Activated CD4-positive, alpha-beta memory T cell treated with anti-CD3 and anti-CD28 coated beads, Interleukin-2, amount 10 ng/mL, durations not matched to agents 7 days and 5 days (primary cell): ENCODE measurements at regions of chr11 and their contacts with region 1.

Region 1: DNA sequence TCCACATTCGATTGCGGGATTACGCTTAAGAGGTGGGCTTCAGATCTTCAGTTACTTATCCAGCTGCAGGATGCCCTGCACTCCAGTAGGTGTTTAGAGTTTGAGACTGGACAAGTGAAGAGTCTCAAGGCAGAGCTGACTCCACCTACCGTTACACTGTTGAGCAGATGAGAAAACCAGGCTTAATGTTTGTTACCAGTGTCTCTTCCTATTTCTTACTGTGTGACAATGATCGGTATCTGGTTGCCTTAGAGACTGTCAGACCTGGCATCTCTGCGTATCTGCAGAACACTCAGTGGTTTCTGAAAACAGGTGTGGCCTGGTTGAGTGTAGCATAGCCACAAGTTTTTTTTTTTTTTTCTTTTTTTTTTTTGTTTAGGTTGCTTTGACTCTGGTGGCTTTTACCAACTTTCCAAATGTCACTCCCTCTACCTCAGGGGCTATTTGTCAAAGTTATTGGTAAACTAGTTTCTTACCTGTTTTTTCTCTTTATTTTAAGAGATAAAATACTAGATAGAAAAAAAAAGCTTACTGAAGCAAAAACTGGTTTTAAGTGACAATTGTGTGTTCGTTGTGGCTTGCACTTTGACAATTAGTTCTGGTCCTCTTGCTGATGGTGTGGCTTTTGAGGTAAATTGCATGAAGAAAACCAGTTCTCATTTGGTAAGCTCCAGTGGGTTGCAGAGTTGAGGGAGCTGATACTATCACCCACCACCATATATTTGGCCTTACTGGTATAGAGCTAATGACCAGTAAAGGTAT is 284.8 kb downstream of the ETS1 start:
- DNase-seq: peak; percentile 84
- H3K4me3 Mint-ChIP-seq: peak overlapping the region; percentile 84
- H3K27ac Mint-ChIP-seq: peak overlapping the region; percentile 87
- H3K4me1 Mint-ChIP-seq: peaks cover 72% of the 10 kb centered on the region
- H3K27me3 Mint-ChIP-seq: no peaks in the 10 kb centered on the region

Region 2: DNA sequence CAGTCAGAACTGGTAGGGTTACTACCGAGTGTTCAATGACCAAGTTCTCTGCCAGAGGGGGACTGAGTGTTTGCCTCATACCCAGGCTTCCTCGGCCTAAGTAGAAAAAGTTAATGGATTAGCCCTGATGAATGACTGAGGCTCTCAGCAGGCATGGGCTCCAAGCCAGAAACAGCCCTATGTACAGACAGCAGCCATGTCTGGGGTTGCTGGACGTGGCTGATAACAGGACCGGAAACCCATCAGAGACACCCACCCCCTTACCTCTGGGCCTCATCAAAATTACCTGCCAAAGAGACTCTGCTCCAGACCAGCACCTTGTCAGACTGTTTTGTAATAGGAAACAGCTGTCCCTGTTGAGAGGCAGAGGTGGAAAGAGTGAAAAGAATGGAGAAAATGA is 66.6 kb before region 1 on chr11:
- CTCF ChIA-PET with region 1: no interaction called
- POLR2A ChIA-PET with region 1: no interaction called
- DNase-seq: no peak
- H3K4me3 Mint-ChIP-seq: no peak overlapping the region
- H3K27ac Mint-ChIP-seq: no peak overlapping the region
- H3K4me1 Mint-ChIP-seq: peaks cover 32% of the 10 kb centered on the region
- H3K27me3 Mint-ChIP-seq: no peaks in the 10 kb centered on the region

Region 3: GRCh38 chr11:128328955-128329551 is 26.4 kb after region 1 on chr11:
- CTCF ChIA-PET with region 1: interaction called, 64 read pairs
- POLR2A ChIA-PET with region 1: interaction called, 109 read pairs
- DNase-seq: no peak
- H3K4me3 Mint-ChIP-seq: peak overlapping the region; percentile 21
- H3K27ac Mint-ChIP-seq: peak overlapping the region; percentile 79
- H3K4me1 Mint-ChIP-seq: peaks cover 80% of the 10 kb centered on the region
- H3K27me3 Mint-ChIP-seq: no peaks in the 10 kb centered on the region

Region 4: DNA sequence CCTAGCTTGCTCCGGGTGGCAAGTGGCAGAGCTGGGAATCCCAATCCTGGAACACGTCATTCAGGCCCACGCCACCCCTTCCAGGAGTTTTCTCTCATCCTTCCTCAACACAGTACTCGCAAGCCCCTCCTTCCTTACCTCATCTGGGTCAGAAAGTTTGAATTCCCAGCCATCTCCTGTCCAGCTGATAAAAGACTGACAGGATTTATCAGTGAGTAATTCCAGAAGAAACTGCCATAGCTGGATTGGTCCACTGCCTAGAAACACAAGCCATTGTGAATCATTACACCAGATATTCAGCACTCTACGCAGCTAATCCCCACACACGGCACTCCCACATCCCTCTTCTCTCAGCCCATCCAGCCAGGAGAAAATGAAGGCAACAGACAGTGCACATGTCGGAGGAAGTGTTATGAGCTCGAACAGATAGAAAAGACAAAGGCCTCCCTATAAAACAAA is 160.8 kb after region 1 on chr11:
- CTCF ChIA-PET with region 1: interaction called, 8 read pairs
- POLR2A ChIA-PET with region 1: interaction called, 34 read pairs
- DNase-seq: no peak
- H3K4me3 Mint-ChIP-seq: peak overlapping the region; percentile 9
- H3K27ac Mint-ChIP-seq: peak overlapping the region; percentile 80
- H3K4me1 Mint-ChIP-seq: peaks cover 86% of the 10 kb centered on the region
- H3K27me3 Mint-ChIP-seq: no peaks in the 10 kb centered on the region

Region 5: DNA sequence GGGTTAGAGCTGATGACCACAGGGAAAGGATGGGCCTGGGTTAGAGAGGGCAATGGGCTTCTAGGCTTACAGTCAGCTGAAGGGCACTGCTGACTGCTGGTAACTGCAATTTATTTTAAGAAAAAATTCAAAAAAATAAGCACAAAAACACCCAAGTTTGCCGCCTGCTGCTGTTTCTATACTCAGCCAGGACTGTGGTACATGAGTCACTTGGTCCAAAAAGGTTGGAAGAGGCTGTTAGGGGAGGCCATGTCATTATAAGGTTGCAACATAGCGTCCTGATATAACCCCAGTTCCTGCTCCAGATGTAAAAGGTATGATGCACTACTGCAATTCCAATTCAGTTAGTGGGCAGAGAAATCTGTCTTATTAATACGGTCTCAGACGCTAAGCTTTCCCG is 185.9 kb after region 1 on chr11:
- CTCF ChIA-PET with region 1: interaction called, 7 read pairs
- POLR2A ChIA-PET with region 1: interaction called, 34 read pairs
- DNase-seq: no peak
- H3K4me3 Mint-ChIP-seq: peak overlapping the region; percentile 29
- H3K27ac Mint-ChIP-seq: peak overlapping the region; percentile 87
- H3K4me1 Mint-ChIP-seq: peaks cover 95% of the 10 kb centered on the region
- H3K27me3 Mint-ChIP-seq: no peaks in the 10 kb centered on the region

Region 6: GRCh38 chr11:128522055-128522942 is 219.7 kb after region 1 on chr11:
- CTCF ChIA-PET with region 1: interaction called, 10 read pairs
- POLR2A ChIA-PET with region 1: interaction called, 271 read pairs
- DNase-seq: peak; percentile 94
- H3K4me3 Mint-ChIP-seq: peak overlapping the region; percentile 97
- H3K27ac Mint-ChIP-seq: peak overlapping the region; percentile 88
- H3K4me1 Mint-ChIP-seq: peaks cover 44% of the 10 kb centered on the region
- H3K27me3 Mint-ChIP-seq: no peaks in the 10 kb centered on the region

Region 7: GRCh38 chr11:128695539-128696221 is 393.1 kb after region 1 on chr11:
- CTCF ChIA-PET with region 1: no interaction called
- POLR2A ChIA-PET with region 1: interaction called, 10 read pairs
- DNase-seq: peak; percentile 67
- H3K4me3 Mint-ChIP-seq: peak overlapping the region; percentile 98
- H3K27ac Mint-ChIP-seq: peak overlapping the region; percentile 97
- H3K4me1 Mint-ChIP-seq: peaks cover 58% of the 10 kb centered on the region
- H3K27me3 Mint-ChIP-seq: peaks cover 10% of the 10 kb centered on the region